ENCODE measurements at regions of chr10 and their contacts with region 1.

Region 1: DNA sequence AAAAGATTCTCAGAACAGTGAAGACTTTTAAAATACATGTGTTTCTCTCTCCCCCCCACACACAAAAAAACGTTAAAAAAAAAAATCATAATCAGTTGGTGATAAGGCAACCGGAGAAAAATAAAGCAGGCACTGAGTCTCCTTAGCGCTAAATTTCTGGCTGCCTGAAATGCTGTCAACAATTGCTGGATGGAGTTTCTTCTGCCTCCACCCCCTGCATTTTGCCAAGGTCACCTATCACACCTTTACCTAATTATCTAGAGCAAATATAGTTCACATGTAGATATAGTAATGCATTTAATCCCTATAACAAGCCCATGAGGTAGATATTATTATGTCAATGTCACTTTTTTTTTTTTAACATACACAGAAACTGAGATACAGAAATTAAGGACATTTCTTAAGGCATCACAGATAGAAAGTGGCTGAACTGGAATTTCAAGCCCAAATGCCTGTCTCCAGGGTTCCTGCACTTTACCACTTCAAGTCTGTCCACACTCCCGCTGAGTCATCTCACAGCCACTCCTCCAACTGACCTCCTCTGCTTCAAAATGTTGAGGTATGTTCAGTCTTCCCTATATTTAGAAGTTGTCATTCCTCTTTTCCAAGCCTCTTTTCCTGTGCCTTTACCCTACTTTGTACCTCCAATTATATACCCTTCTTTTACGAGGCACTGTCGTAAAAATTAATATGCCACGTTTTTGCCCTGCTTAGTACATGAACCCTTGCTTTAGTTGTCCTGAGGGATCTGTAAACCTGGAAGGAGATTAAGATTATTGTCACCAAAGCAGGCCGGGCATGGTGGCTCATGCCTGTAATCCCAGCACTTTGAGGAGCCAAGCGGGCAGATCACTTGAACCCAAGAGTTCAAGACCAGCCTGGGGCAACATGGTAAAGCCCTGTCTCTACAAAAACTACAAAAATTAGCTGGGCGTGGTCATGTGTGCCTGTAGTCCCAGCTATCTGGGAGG is 72.8 kb upstream of the MPP7 start:
- DNase-seq: no peak

Region 2: DNA sequence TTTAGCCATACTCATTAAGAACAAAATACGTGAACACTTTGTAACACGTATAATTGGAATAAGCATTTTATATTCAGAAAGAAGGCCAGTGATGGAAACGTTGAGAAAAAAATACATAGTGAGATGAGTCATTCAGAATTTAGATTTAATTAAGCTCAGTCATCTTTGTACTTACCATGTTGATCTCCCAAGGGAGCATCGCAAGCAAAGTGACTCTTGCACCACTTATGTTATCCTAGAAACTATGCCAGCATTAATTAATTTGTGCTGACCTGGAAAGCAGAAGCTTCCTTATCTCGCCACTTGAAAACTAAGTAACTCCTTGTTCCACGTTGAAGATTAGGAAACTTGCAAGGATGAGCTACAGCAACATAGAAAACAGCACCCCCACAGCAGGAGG is 63.1 kb before region 1 on chr10:
- intact Hi-C with region 1: no loop called
- DNase-seq: no peak

Region 3: GRCh38 chr10:28326516-28327490 is 48.9 kb before region 1 on chr10:
- intact Hi-C with region 1: loop called in 1 of 2 experiments (anchors 10 kb)
- DNase-seq: no peak

Region 4: GRCh38 chr10:28503114-28503513 is 127.4 kb after region 1 on chr10:
- intact Hi-C with region 1: no loop called
- DNase-seq: no peak